T-cell (primary cell): ENCODE measurements at regions of chr3 and their contacts with region 1.

Region 1: DNA sequence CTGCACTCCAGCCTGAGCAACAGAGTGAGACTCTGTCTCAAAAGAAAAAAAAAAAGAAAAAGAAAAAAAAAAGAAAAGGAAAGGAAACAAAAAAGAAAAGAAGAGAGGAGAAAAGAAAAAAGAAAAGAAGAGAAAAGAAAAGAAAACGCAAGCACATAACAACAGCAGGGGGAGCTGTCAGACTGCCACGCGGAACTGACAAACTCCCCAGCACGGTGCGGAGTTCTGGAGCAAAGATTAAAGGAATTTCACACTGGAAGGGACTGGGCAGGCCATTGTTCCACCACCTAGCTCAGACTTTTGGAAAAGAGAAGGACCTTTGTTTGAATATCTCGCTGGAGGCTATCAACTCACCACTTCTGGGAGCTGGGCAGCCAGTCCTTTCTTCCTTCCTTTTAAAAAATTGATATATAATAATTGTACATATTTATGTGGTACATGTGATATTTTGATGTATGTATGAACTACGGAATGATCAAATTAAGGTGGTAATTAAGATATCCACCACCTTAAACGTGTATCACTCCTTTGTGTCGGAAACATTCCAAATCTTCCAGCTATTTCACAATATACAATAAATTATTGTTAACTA is 40.5 kb downstream of the DPPA2 start:
- DNase-seq: peak in 1 of 35 experiments; percentile 8
- ATAC-seq: no peak
- H3K4me3 ChIP-seq: no peak overlapping the region
- H3K4me3 Mint-ChIP-seq: no peak overlapping the region
- H3K27ac ChIP-seq: no peak overlapping the region
- H3K27ac Mint-ChIP-seq: no peak overlapping the region
- H3K4me1 ChIP-seq: no peaks in the 10 kb centered on the region
- H3K4me1 Mint-ChIP-seq: peaks cover 0 to 2% (median 0%) of the 10 kb centered on the region in 3 donors
- H3K27me3 ChIP-seq: no peaks in the 10 kb centered on the region
- H3K27me3 Mint-ChIP-seq: peaks cover 0 to 2% of the 10 kb centered on the region in 2 donors

Region 2: DNA sequence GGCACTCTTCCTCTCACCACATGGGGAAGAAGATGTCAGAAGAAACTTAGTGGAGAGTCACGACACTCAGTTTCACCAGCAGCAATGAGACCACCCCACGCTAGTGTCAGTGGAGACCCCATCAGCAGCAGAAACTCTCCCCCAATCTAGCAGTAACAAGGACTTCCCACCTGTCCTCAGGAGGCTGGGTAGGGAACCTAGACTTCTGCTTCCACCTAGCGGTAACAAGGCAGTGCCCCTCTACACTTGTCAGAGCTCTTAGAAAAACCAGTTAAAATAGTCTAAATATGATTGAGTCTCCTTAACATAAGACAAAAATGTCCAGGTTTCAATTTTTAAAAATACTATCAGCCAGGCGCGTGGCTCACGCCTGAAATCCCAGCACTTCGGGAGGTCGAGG is 395.9 kb before region 1 on chr3:
- CTCF ChIA-PET with region 1: interaction called in 1 of 2 experiments, 10 read pairs
- POLR2A ChIA-PET with region 1: no interaction called
- DNase-seq: no peak
- ATAC-seq: no peak
- H3K4me3 ChIP-seq: no peak overlapping the region
- H3K4me3 Mint-ChIP-seq: no peak overlapping the region
- H3K27ac ChIP-seq: no peak overlapping the region
- H3K27ac Mint-ChIP-seq: no peak overlapping the region
- H3K4me1 ChIP-seq: no peaks in the 10 kb centered on the region
- H3K4me1 Mint-ChIP-seq: peaks cover 10 to 13% (median 13%) of the 10 kb centered on the region in 3 donors
- H3K27me3 ChIP-seq: no peaks in the 10 kb centered on the region
- H3K27me3 Mint-ChIP-seq: no peaks in the 10 kb centered on the region

Region 3: DNA sequence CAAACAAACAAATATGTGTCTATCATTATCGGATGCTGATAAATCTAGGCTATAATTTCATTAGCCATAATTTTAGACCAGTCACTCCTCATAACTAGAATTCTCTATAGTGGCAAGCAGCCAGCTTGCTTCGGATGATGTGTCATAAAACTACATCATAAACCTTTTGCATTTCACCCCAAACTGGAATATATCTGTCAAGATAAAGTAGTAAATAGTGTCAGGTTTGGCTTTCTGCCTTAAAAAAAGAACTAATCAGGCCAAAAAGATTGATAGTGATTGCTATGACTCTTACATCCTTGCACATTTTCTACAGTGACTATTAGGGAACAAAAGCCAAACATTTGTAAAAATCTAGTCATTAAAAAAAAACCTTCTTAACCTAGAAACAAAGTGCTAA is 10.5 kb before region 1 on chr3:
- CTCF ChIA-PET with region 1: no interaction called
- POLR2A ChIA-PET with region 1: no interaction called
- DNase-seq: no peak
- ATAC-seq: no peak
- H3K4me3 ChIP-seq: no peak overlapping the region
- H3K4me3 Mint-ChIP-seq: no peak overlapping the region
- H3K27ac ChIP-seq: no peak overlapping the region
- H3K27ac Mint-ChIP-seq: no peak overlapping the region
- H3K4me1 ChIP-seq: no peaks in the 10 kb centered on the region
- H3K4me1 Mint-ChIP-seq: no peaks in the 10 kb centered on the region
- H3K27me3 ChIP-seq: no peaks in the 10 kb centered on the region
- H3K27me3 Mint-ChIP-seq: peaks cover 1 to 3% of the 10 kb centered on the region in 2 donors